GM23248 (cell line): ENCODE measurements at regions of chr2 and their contacts with region 1.

Region 1: DNA sequence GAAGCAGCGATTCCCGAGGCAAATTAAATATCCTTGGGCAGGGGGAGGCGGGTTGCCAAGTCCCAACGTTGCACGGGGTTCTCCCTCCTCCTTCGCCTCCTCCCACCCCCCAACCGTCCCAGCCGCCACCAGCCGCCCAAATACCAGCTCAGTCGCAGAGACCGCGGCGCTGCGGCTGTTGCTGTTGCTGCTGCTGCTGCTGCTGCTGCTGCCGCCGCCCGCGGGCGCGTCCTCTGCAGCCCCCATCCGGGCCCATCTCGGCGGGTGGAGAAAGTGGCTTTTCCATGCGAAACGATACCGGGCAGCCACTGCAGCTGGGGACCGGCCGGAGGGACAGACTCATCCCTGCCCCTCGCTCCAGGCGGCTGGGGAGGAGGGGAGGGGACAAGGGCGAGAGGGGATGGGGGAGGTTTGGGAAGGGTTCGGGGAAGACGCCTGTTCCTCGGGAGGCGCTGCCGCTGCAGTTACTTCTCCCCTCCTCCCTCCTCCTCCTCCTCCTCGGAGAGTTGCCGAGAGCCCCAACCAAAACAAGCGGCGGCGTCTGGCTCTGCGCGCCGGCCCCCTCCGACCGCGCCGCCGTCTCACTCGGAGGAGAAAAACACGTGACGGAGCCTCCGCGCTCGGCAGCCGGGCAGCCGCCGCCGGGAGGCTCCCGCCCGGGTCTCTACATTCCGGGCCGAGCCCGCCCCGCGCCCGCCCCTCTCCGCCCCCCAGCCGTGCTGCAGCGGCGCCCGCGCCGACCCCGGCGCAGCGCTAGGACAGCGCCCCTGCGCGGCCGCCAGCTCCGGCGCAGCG is at the start of gene IRS1:
- DNase-seq: peak; percentile 89
- H3K4me3 ChIP-seq: peak within 1 kb of the TSS; percentile 75
- H3K27ac ChIP-seq: peak within 1 kb of the TSS; percentile 61
- H3K4me1 ChIP-seq: 0 out of 2 replicates have a peak, but pooled peaks cover 8% of the 10 kb centered on the region
- H3K27me3 ChIP-seq: no peaks in the 10 kb centered on the region
- total RNA-seq, gene IRS1: 18.8 TPM in 2 replicates

Region 2: DNA sequence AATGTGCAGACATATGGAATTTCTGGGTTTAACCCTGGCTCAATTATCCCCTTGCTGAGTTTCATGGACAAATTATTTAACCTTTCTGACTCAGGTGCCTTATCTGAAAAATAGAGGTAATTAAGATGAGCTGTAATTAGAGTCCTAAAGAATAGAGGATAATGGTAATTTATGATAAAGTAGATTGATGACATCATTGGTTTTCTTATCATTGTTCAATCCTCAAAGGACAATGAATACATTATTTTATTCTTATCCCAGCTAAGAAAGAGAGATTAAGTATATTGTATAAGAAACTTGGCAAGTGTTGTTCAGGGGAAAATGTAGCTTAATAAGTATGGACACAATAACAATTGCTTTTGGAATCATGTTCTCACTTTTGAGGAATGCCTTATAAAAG is 1120.6 kb before region 1 on chr2:
- in situ Hi-C with region 1: loop called (anchors 5 kb)
- DNase-seq: no peak
- H3K4me3 ChIP-seq: no peak overlapping the region
- H3K27ac ChIP-seq: no peak overlapping the region
- H3K4me1 ChIP-seq: no peaks in the 10 kb centered on the region
- H3K27me3 ChIP-seq: no peaks in the 10 kb centered on the region

Region 3: DNA sequence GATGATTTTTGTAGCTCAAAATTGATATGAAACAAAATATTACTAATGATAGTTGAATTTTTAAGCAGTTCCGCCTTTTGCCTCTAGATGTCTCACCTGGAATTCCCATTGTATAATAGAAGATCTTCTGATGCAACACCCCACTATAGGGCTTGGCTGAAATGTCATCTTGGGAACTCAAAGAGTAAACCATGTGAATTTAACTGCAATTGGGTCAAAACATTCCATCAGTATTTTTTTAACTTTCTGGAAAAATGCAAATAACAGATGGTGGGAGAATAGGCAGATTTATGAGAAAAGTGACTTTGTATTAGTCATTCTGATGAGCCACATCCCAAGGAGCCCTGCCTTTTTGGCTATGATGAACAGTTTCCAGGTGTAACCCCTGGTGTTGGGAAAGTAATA is 909.9 kb before region 1 on chr2:
- in situ Hi-C with region 1: loop called (anchors 5 kb)
- DNase-seq: peak; percentile 86
- H3K4me3 ChIP-seq: no peak overlapping the region
- H3K27ac ChIP-seq: peak overlapping the region; percentile 29
- H3K4me1 ChIP-seq: peaks cover 15% of the 10 kb centered on the region
- H3K27me3 ChIP-seq: no peaks in the 10 kb centered on the region

Region 4: GRCh38 chr2:227117027-227117426 is 317.6 kb after region 1 on chr2:
- in situ Hi-C with region 1: loop called (anchors 10 kb)
- DNase-seq: no peak
- H3K4me3 ChIP-seq: no peak overlapping the region
- H3K27ac ChIP-seq: no peak overlapping the region
- H3K4me1 ChIP-seq: peaks cover 4% of the 10 kb centered on the region; the same call in 1 of the 2 replicates
- H3K27me3 ChIP-seq: no peaks in the 10 kb centered on the region

Region 5: GRCh38 chr2:227744276-227744675 is 944.9 kb after region 1 on chr2:
- in situ Hi-C with region 1: no loop called
- DNase-seq: no peak
- H3K4me3 ChIP-seq: no peak overlapping the region
- H3K27ac ChIP-seq: no peak overlapping the region
- H3K4me1 ChIP-seq: no peaks in the 10 kb centered on the region
- H3K27me3 ChIP-seq: no peaks in the 10 kb centered on the region